Mammary epithelial cell (primary cell): ENCODE measurements at regions of chr17 and their contacts with region 1.

Region 1: GRCh38 chr17:28612936-28613872 is 781 bp downstream of the RSKR start:
- DNase-seq: peak; percentile 2
- H3K4me3 ChIP-seq: no peak overlapping the region
- H3K27ac ChIP-seq: no peak overlapping the region
- H3K4me1 ChIP-seq: no peaks in the 10 kb centered on the region
- H3K27me3 ChIP-seq: no peaks in the 10 kb centered on the region
- CTCF ChIP-seq: peak; percentile 52 to 65

Region 2: DNA sequence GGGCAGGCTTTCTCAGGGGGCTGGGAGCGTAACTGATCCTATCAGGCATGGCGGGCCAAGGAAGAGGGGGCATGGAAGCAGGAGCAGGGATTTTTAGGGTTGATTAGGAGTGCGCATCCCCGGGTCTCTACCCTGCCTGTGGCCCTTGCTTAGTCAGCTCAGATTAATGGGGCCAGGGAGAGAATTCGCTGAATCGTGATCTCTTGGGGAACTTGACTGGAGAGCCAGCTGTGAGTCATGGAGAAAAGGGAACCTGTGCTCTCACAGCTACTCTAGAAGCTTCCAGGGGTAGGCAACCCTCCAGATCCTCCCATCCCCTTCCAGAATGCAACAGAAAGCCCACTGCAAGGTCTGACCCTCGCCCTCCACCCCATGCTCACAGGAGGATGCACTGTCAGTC is 103.4 kb before region 1 on chr17:
- CTCF ChIA-PET with region 1: no interaction called
- dilution Hi-C with region 1: loop called (anchors 5 kb)
- in situ Hi-C with region 1: no loop called
- intact Hi-C with region 1: no loop called
- DNase-seq: no peak
- H3K4me3 ChIP-seq: no peak overlapping the region
- H3K27ac ChIP-seq: no peak overlapping the region
- H3K4me1 ChIP-seq: peaks cover 18% of the 10 kb centered on the region
- H3K27me3 ChIP-seq: no peaks in the 10 kb centered on the region
- CTCF ChIP-seq: no peak

Region 3: GRCh38 chr17:28547623-28548416 is 65.4 kb before region 1 on chr17:
- CTCF ChIA-PET with region 1: no interaction called
- dilution Hi-C with region 1: loop called (anchors 5 kb)
- in situ Hi-C with region 1: no loop called
- intact Hi-C with region 1: loop called (anchors 1 kb)
- DNase-seq: peak; percentile 50
- H3K4me3 ChIP-seq: no peak overlapping the region
- H3K27ac ChIP-seq: no peak overlapping the region
- H3K4me1 ChIP-seq: peaks cover 6% of the 10 kb centered on the region
- H3K27me3 ChIP-seq: no peaks in the 10 kb centered on the region
- CTCF ChIP-seq: peak; percentile 84 to 99

Region 4: DNA sequence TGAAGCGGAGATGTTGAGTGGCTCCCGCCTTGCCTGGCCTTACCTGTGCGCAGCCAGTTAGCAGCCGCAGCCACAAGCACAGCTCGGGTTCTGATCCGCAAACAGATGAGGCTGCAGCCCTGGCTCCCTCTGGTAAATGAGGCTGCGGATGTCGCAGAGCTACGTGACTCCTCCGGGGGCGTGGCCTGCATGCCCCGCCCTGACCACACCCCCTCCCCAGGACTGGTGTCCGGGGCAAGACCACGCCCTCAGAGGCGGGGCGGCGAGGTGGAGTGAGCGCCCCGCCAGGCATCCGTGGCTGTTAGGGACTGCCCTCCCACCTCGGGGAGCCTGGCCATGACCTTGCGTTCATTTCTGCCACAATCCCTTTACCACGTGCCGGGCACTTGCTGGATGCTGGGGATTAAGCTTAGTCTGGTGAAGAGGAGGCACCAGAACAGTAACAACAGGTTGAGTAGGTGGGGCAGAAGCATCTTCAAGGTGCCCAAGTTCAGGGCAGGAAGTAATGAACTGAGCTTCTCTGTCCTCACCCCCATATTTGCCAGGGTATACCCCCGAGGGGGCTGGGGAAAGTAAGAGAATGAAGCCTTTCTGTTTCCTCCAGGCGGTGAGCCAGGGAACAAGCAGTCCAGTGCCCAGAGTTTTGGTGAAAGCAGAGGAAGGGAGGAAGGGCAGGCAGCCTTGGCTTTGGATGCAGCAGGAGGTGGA is 36.3 kb before region 1 on chr17 and contains the start of gene ALDOC:
- CTCF ChIA-PET with region 1: no interaction called
- dilution Hi-C with region 1: loop called (anchors 5 kb)
- in situ Hi-C with region 1: no loop called
- intact Hi-C with region 1: no loop called
- DNase-seq: peak; percentile 90
- H3K4me3 ChIP-seq: peak within 1 kb of the TSS in 2 of 3 experiments; percentile 39 to 43
- H3K27ac ChIP-seq: no peak within 1 kb of the TSS
- H3K4me1 ChIP-seq: peaks cover 14% of the 10 kb centered on the region
- H3K27me3 ChIP-seq: no peaks in the 10 kb centered on the region
- CTCF ChIP-seq: no peak
- total RNA-seq, gene ALDOC: 45.4 to 46.0 TPM

Region 5: DNA sequence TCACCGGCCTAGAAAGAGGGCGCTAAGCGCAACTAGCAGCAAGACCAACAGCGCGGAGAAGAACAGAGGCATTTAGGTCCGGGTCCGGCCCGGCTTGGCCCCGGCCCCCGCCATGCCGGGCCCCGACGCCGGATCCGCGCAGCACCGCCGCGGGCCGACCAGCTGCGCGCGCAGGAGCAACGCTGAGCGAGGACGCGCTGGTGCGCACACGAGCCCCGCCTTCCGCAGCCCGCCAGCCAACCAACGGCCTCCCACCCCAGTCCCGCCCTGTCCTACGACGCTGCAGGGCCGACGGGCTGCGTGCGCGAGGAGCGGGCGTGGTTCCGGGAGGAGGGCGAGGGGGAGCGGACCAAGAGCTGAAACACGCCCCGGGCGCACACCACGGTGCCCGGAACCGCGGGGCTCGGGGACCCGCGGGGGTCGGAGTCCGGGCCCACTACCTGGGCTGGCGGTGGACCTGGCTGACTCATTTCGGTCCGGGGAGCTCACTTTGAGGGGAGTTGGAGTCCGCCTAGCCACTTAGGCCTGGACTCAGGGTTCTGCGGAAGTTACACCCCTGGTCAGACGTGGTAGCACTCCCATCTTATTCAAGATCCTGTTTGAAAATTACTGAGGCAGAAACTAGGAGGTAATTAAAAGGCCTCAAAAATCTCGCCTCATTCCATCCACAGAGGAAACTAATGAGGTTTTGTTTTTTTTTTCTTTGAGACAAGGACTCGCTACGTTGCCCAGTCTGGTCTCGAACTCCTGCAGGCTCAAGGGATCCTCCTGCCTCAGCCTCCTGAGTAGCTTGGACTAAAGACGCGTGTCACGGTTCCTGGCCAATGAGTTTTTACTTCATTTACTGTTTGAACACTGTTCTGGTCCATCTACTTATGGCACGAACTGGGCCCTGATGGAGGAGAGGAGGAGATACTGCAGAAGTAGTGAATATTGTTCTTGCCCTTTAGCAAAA is 32.1 kb after region 1 on chr17 and contains the start of gene BLTP2:
- CTCF ChIA-PET with region 1: interaction called, 13 read pairs
- dilution Hi-C with region 1: no loop called
- in situ Hi-C with region 1: no loop called
- intact Hi-C with region 1: no loop called
- DNase-seq: peak; percentile 93
- H3K4me3 ChIP-seq: peak within 1 kb of the TSS; percentile 73 to 91 (median 76)
- H3K27ac ChIP-seq: peak within 1 kb of the TSS; percentile 73
- H3K4me1 ChIP-seq: peaks cover 17% of the 10 kb centered on the region
- H3K27me3 ChIP-seq: no peaks in the 10 kb centered on the region
- CTCF ChIP-seq: no peak
- total RNA-seq, gene BLTP2: 117 to 124 TPM

Region 6: GRCh38 chr17:28669918-28670317 is 56.7 kb after region 1 on chr17:
- CTCF ChIA-PET with region 1: no interaction called
- dilution Hi-C with region 1: loop called (anchors 5 kb)
- in situ Hi-C with region 1: no loop called
- intact Hi-C with region 1: no loop called
- DNase-seq: no peak
- H3K4me3 ChIP-seq: no peak overlapping the region
- H3K27ac ChIP-seq: no peak overlapping the region
- H3K4me1 ChIP-seq: peaks cover 8% of the 10 kb centered on the region
- H3K27me3 ChIP-seq: no peaks in the 10 kb centered on the region
- CTCF ChIP-seq: no peak

Region 7: GRCh38 chr17:28760601-28761562 is 147.7 kb after region 1 on chr17:
- CTCF ChIA-PET with region 1: no interaction called
- dilution Hi-C with region 1: no loop called
- in situ Hi-C with region 1: no loop called
- intact Hi-C with region 1: no loop called
- DNase-seq: peak; percentile 52
- H3K4me3 ChIP-seq: no peak overlapping the region
- H3K27ac ChIP-seq: no peak overlapping the region
- H3K4me1 ChIP-seq: peaks cover 15% of the 10 kb centered on the region
- H3K27me3 ChIP-seq: no peaks in the 10 kb centered on the region
- CTCF ChIP-seq: no peak